Activated B cell treated with CpG ODN at 0.5 μM for 24 hours (primary cell): ENCODE measurements at regions of chr4 and their contacts with region 1.

Region 1: DNA sequence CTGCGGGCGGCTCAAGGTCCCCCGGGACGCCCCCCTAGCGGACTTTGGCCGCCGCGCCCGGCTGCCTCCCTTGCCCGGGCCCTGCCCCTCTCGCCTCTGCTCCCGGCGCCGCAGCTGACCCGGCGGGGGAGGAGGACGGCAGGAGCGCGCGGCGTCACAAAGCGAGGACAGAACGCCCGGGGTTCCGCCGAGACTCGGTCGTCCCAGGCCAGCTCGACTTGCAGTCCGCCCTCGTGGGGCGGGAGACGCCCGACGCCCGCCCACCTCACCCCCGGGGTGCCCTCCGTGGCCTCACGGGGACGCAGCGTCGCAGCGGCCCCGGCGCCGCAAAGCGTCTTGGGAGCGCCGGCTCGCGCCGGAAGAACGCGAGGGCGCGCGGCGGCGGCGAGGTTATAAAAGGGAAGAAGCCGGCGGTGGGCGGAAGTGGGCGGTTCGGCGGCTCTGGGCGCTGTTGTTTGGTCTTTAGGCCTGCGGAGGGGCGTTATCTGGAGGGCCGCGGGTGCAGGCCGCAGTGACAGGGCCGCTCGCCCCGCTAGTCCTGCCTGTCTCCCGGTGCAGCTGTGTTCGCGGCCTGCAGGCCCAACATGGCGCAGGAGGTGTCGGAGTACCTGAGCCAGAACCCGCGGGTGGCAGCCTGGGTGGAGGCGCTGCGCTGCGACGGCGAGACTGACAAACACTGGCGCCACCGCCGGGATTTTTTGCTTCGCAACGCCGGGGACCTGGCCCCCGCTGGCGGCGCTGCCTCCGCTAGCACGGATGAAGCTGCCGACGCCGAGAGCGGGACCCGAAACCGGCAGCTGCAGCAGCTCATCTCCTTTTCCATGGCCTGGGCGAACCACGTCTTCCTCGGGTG is at the start of gene CDKN2AIP:
- DNase-seq: peak; percentile 93
- ATAC-seq: peak; percentile 86
- H3K4me3 Mint-ChIP-seq: peak within 1 kb of the TSS; percentile 95
- H3K27ac Mint-ChIP-seq: peak within 1 kb of the TSS; percentile 95
- H3K4me1 Mint-ChIP-seq: peaks cover 36% of the 10 kb centered on the region
- H3K27me3 Mint-ChIP-seq: no peaks in the 10 kb centered on the region
- CTCF ChIP-seq: no peak
- total RNA-seq, gene CDKN2AIP: 19.9 and 21.8 TPM in 2 replicates

Region 2: GRCh38 chr4:182917182-182918043 is 527.0 kb before region 1 on chr4 and contains the start of gene DCTD:
- CTCF ChIA-PET with region 1: interaction called, 3 read pairs
- POLR2A ChIA-PET with region 1: interaction called, 4 read pairs
- intact Hi-C with region 1: loop called (anchors 1 kb)
- DNase-seq: peak; percentile 80
- ATAC-seq: peak; percentile 79
- H3K4me3 Mint-ChIP-seq: peak within 1 kb of the TSS; percentile 93
- H3K27ac Mint-ChIP-seq: peak within 1 kb of the TSS; percentile 94
- H3K4me1 Mint-ChIP-seq: peaks cover 33% of the 10 kb centered on the region
- H3K27me3 Mint-ChIP-seq: peaks cover 4% of the 10 kb centered on the region
- CTCF ChIP-seq: no peak
- total RNA-seq, gene DCTD: 75.7 and 76.8 TPM in 2 replicates

Region 3: DNA sequence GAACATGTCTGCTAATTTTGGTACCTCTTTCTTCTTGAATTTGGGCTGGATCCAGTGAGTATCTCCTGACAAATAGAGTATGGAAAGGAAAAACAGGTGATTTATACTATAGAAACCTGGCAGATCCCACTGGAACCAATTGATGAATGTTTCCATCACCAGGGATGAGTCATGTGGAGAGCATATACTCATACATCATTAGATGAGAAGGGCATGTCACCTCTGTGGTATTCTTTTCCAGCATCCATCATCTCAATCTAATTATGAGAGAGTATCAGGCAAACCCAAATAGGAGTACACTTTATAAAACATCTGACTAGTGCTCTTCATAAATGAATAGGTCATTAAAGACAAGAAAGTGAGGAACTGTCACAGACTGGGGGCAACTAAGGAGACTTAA is 215.0 kb before region 1 on chr4:
- CTCF ChIA-PET with region 1: no interaction called
- POLR2A ChIA-PET with region 1: no interaction called
- intact Hi-C with region 1: no loop called
- DNase-seq: no peak
- ATAC-seq: no peak
- H3K4me3 Mint-ChIP-seq: no peak overlapping the region
- H3K27ac Mint-ChIP-seq: no peak overlapping the region
- H3K4me1 Mint-ChIP-seq: no peaks in the 10 kb centered on the region
- H3K27me3 Mint-ChIP-seq: peaks cover 3% of the 10 kb centered on the region
- CTCF ChIP-seq: no peak

Region 4: GRCh38 chr4:183321079-183321478 is 123.4 kb before region 1 on chr4:
- CTCF ChIA-PET with region 1: no interaction called
- POLR2A ChIA-PET with region 1: no interaction called
- intact Hi-C with region 1: no loop called
- DNase-seq: no peak
- ATAC-seq: no peak
- H3K4me3 Mint-ChIP-seq: no peak overlapping the region
- H3K27ac Mint-ChIP-seq: no peak overlapping the region
- H3K4me1 Mint-ChIP-seq: no peaks in the 10 kb centered on the region
- H3K27me3 Mint-ChIP-seq: peaks cover 3% of the 10 kb centered on the region
- CTCF ChIP-seq: no peak

Region 5: GRCh38 chr4:183398227-183399125 is 46.0 kb before region 1 on chr4:
- CTCF ChIA-PET with region 1: no interaction called
- POLR2A ChIA-PET with region 1: interaction called, 13 read pairs
- intact Hi-C with region 1: loop called (anchors 1 kb)
- DNase-seq: peak; percentile 57
- ATAC-seq: peak; percentile 89
- H3K4me3 Mint-ChIP-seq: peak overlapping the region; percentile 82
- H3K27ac Mint-ChIP-seq: peak overlapping the region; percentile 82
- H3K4me1 Mint-ChIP-seq: peaks cover 25% of the 10 kb centered on the region
- H3K27me3 Mint-ChIP-seq: peaks cover 7% of the 10 kb centered on the region
- CTCF ChIP-seq: no peak

Region 6: DNA sequence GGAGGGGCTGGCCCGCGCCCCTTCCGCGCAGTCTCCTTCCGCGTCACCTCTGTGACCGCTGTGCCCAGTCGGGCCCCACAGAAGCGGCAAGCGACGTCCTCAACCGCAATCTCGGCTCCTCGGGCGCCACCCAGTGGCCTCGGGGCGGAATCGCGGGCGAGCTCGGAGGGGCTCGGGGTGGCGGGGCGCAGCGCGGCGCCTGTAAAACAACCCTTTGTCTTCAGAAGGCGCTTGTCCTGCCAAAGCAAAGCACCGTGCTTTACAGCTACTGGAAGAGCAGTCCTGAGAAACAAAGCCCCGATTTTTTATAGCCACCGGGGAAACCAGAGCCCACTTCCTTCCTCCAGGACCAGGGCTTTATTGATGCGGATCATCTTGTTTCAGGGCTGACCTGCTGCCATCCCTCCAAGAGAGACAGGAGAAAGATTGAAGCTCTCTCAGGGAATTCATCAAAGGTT is 37.3 kb before region 1 on chr4:
- CTCF ChIA-PET with region 1: interaction called, 18 read pairs
- POLR2A ChIA-PET with region 1: interaction called, 17 read pairs
- intact Hi-C with region 1: loop called (anchors 1 kb)
- DNase-seq: peak; percentile 90
- ATAC-seq: peak; percentile 99
- H3K4me3 Mint-ChIP-seq: peak overlapping the region; percentile 79
- H3K27ac Mint-ChIP-seq: peak overlapping the region; percentile 35
- H3K4me1 Mint-ChIP-seq: peaks cover 15% of the 10 kb centered on the region
- H3K27me3 Mint-ChIP-seq: no peaks in the 10 kb centered on the region
- CTCF ChIP-seq: no peak

Region 7: GRCh38 chr4:183659029-183659871 is 214.8 kb after region 1 on chr4 and contains the starts of genes RWDD4 and TRAPPC11:
- CTCF ChIA-PET with region 1: no interaction called
- POLR2A ChIA-PET with region 1: interaction called, 14 read pairs
- intact Hi-C with region 1: loop called (anchors 1 kb)
- DNase-seq: peak; percentile 87
- ATAC-seq: peak; percentile 98
- H3K4me3 Mint-ChIP-seq: peak within 1 kb of the TSS; percentile 93
- H3K27ac Mint-ChIP-seq: peak within 1 kb of the TSS; percentile 92
- H3K4me1 Mint-ChIP-seq: peaks cover 33% of the 10 kb centered on the region
- H3K27me3 Mint-ChIP-seq: no peaks in the 10 kb centered on the region
- CTCF ChIP-seq: no peak
- total RNA-seq, gene RWDD4: 14.6 and 15.4 TPM in 2 replicates
- total RNA-seq, gene TRAPPC11: 42.9 and 45.2 TPM in 2 replicates

Region 8: DNA sequence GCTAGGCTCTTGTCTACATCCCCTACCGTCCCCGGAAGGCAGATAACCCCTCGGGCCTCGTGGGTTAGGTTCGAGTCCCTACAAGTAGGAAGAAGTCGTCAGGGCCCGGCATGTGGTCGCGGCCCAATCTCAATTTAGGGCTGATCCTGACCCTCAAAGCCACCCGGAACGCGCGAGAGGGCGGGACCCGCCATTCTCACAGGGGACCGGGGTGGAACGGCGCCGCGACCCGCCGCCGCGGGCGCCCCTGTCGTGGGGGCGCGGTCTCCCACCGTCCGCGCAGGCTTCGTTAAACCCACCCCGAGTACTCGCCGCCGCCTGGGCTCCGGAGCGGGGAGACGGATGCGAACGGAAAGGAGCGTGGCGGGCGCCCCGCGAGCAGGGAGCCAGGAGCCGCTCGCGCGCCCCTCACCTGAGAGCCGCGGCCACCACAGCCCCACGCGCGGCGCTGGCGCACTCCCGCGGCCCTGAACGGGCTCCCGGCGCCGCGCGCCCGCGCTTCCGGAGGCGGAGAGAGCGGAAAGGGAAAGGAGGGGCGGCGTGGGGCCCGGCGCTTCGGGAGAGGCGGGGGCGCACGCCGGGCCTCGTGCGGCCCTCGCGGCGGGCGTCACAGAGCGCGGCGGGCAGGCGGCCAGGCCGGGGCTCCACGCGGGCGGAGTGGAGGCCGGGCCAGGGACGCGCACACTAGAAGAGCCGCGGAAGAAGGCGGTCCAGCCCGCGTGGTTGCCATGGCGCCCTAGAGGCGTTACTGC is 1759.2 kb after region 1 on chr4 and contains the start of gene CFAP97:
- CTCF ChIA-PET with region 1: no interaction called
- POLR2A ChIA-PET with region 1: no interaction called
- intact Hi-C with region 1: loop called (anchors 5 kb)
- DNase-seq: peak; percentile 82
- ATAC-seq: peak; percentile 81
- H3K4me3 Mint-ChIP-seq: peak within 1 kb of the TSS; percentile 93
- H3K27ac Mint-ChIP-seq: peak within 1 kb of the TSS; percentile 97
- H3K4me1 Mint-ChIP-seq: peaks cover 47% of the 10 kb centered on the region
- H3K27me3 Mint-ChIP-seq: no peaks in the 10 kb centered on the region
- CTCF ChIP-seq: no peak
- total RNA-seq, gene CFAP97: 42.6 and 44.1 TPM in 2 replicates